B cell (primary cell): ENCODE measurements at regions of chr7 and their contacts with region 1.

Region 1: DNA sequence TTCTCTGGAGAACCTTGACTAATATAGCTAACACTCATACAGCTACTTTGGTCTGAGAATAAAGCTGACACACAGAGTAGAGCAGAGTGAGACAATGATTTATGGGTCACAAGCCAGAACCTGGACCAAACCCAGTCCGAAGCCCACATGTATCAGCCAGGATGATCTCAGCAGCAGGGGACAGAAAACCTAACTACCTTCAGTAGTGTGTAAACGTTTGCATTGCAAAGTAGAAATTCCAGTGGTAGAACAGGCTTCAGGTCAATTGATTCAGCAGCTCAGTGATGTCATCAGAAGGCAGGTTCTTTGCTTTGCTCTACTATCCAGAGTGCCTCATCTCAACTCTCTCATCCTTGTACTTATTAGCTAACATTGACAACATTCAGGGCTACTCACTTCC is 62.5 kb upstream of the PALS2 start:
- DNase-seq: no peak
- ATAC-seq: no peak
- H3K4me3 ChIP-seq: no peak overlapping the region
- H3K4me3 Mint-ChIP-seq: no peak overlapping the region
- H3K27ac ChIP-seq: no peak overlapping the region
- H3K27ac Mint-ChIP-seq: no peak overlapping the region
- H3K4me1 ChIP-seq: no peaks in the 10 kb centered on the region
- H3K4me1 Mint-ChIP-seq: no peaks in the 10 kb centered on the region
- H3K27me3 ChIP-seq: no peaks in the 10 kb centered on the region
- H3K27me3 Mint-ChIP-seq: peaks cover 25% of the 10 kb centered on the region
- CTCF ChIP-seq: no peak

Region 2: GRCh38 chr7:24521917-24522620 is 11.3 kb after region 1 on chr7:
- CTCF ChIA-PET with region 1: no interaction called
- POLR2A ChIA-PET with region 1: no interaction called
- intact Hi-C with region 1: no loop called
- DNase-seq: no peak
- ATAC-seq: no peak
- H3K4me3 ChIP-seq: no peak overlapping the region
- H3K4me3 Mint-ChIP-seq: no peak overlapping the region
- H3K27ac ChIP-seq: no peak overlapping the region
- H3K27ac Mint-ChIP-seq: no peak overlapping the region
- H3K4me1 ChIP-seq: no peaks in the 10 kb centered on the region
- H3K4me1 Mint-ChIP-seq: no peaks in the 10 kb centered on the region
- H3K27me3 ChIP-seq: peaks cover 0 to 16% (median 5%) of the 10 kb centered on the region in 4 experiments
- H3K27me3 Mint-ChIP-seq: peaks cover 34% of the 10 kb centered on the region
- CTCF ChIP-seq: no peak

Region 3: DNA sequence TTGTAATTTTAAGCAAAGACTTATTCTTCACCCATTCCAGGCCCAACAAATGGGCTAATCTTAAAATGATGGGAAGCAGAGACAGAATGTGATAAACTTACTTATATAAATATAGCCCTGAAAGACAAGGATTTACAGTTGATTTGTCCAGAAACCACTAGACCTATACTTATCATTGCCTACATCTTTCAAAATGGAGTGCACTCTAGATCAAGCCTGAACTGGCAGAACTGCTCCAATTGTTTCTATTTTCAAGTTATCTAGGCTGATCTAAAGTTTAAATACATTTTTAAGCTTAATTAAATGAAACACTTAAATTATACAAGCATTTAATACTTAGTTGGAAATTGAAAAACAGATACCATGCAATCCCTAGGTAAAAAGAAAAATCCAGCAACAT is 37.6 kb after region 1 on chr7:
- CTCF ChIA-PET with region 1: no interaction called
- POLR2A ChIA-PET with region 1: no interaction called
- intact Hi-C with region 1: loop called (anchors 1 kb)
- DNase-seq: no peak
- ATAC-seq: no peak
- H3K4me3 ChIP-seq: no peak overlapping the region
- H3K4me3 Mint-ChIP-seq: no peak overlapping the region
- H3K27ac ChIP-seq: no peak overlapping the region
- H3K27ac Mint-ChIP-seq: no peak overlapping the region
- H3K4me1 ChIP-seq: no peaks in the 10 kb centered on the region
- H3K4me1 Mint-ChIP-seq: no peaks in the 10 kb centered on the region
- H3K27me3 ChIP-seq: peaks cover 0 to 7% (median 3%) of the 10 kb centered on the region in 4 experiments
- H3K27me3 Mint-ChIP-seq: peaks cover 37% of the 10 kb centered on the region
- CTCF ChIP-seq: no peak